PC-9 (cell line): ENCODE measurements at regions of chr10 and their contacts with region 1.

Region 1: DNA sequence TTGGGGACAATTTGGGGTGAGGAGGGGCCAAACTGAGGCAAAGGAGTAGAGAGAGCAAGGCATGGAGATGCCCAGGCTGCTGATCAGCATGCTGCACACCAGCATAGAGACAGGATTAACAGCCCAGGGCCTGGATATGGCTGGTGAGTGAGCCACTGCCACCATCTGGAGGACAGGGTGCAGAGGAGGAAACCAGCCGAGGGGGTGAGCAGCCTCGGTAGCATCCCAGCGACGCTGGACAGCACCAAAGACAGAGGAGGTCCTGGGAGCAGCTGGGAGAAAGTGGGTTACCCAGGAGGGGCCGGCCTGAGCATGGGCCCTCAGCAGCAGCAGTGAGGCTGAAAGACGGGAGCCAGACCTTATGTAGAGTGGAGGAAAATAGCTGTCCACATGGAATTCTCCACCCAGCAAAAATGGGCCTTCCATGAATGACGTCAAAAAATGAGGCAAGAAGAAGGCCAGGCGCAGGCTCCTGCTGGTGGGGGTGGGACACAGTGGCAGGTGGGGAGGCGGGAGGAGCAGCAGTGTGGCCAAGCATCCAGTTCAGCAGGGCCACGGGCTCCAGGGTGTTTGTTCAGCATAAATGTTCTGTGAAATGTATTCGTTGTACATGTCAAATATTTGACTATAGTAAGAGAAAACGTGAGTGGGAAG is 16.7 kb downstream of the RET start:
- DNase-seq: no peak
- H3K4me3 ChIP-seq: no peak overlapping the region
- H3K27ac ChIP-seq: no peak overlapping the region
- H3K4me1 ChIP-seq: no peaks in the 10 kb centered on the region
- H3K27me3 ChIP-seq: peaks cover 33% of the 10 kb centered on the region; the same call in 1 of the 2 replicates
- CTCF ChIP-seq: no peak

Region 2: DNA sequence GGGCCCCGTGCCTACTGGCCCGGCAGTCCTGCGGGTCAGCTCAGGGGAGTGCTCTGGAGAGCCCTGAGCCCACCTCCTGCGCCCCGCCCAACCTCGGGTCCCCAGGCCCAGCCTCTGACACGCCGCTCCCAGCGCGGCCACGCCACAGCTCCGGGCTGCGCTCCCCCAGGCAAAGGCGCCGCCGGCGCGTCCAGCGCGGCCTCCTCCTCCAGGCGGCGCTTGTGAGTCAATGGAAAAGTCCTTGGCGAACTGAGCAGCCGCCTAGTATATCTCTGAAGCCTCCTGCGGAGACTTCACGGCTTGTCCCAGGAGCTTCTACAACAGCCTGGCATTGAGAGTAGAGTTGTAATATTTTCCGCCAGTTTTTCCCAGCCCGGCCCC is 340.4 kb before region 1 on chr10:
- CTCF ChIA-PET with region 1: no interaction called
- POLR2A ChIA-PET with region 1: no interaction called
- intact Hi-C with region 1: loop called (anchors 10 kb)
- DNase-seq: peak in 1 of 2 experiments; percentile 68
- H3K4me3 ChIP-seq: no peak overlapping the region
- H3K27ac ChIP-seq: no peak overlapping the region
- H3K4me1 ChIP-seq: no peaks in the 10 kb centered on the region
- H3K27me3 ChIP-seq: peaks cover 31% of the 10 kb centered on the region
- CTCF ChIP-seq: no peak; the same call in 1 of the 2 replicates